ENCODE measurements at regions of chr4 and their contacts with region 1.

Region 1: DNA sequence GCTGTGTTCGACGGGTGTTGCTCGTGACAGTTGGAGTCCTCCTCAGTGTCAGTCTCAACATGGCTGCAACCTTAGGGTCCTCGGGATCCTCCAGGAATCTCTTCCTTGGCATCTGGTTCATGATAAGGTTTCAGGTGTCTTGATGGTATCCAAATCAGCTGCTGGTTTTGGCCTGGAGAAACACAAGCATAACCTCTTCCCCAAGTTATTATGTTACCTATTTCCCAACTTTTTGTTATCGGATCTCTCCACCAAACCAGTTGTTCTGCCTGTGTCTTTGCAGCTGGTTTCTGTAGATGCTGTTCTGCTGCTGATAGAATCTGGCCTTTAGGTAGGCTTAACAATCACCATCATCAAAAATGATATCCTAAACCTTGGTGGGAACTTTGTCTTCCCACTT is 303.0 kb downstream of the IL15 start:
- DNase-seq: no peak
- ATAC-seq: no peak
- H3K4me3 ChIP-seq: no peak overlapping the region
- H3K27ac ChIP-seq: no peak overlapping the region
- H3K4me1 ChIP-seq: no peaks in the 10 kb centered on the region
- H3K27me3 ChIP-seq: no peaks in the 10 kb centered on the region
- CTCF ChIP-seq: no peak

Region 2: GRCh38 chr4:141957416-141957815 is 18.1 kb after region 1 on chr4:
- intact Hi-C with region 1: loop called in 1 of 10 experiments (anchors 2 kb)
- DNase-seq: no peak
- ATAC-seq: no peak
- H3K4me3 ChIP-seq: no peak overlapping the region
- H3K27ac ChIP-seq: no peak overlapping the region
- H3K4me1 ChIP-seq: no peaks in the 10 kb centered on the region
- H3K27me3 ChIP-seq: no peaks in the 10 kb centered on the region
- CTCF ChIP-seq: no peak

Region 3: GRCh38 chr4:142021181-142021580 is 81.8 kb after region 1 on chr4:
- intact Hi-C with region 1: no loop called
- DNase-seq: no peak
- ATAC-seq: no peak
- H3K4me3 ChIP-seq: no peak overlapping the region
- H3K27ac ChIP-seq: no peak overlapping the region
- H3K4me1 ChIP-seq: no peaks in the 10 kb centered on the region
- H3K27me3 ChIP-seq: no peaks in the 10 kb centered on the region
- CTCF ChIP-seq: no peak

Measured in heart right ventricle (tissue), 16 donors.